ENCODE measurements at regions of chr4 and their contacts with region 1.

Region 1: GRCh38 chr4:115609631-115610030 is 496.2 kb upstream of the NDST4 start:
- DNase-seq: no peak
- ATAC-seq: no peak
- H3K4me3 Mint-ChIP-seq: no peak overlapping the region
- H3K27ac Mint-ChIP-seq: no peak overlapping the region
- H3K4me1 Mint-ChIP-seq: no peaks in the 10 kb centered on the region
- H3K27me3 Mint-ChIP-seq: no peaks in the 10 kb centered on the region
- CTCF ChIP-seq: no peak

Region 2: GRCh38 chr4:116197317-116197809 is 587.7 kb after region 1 on chr4:
- CTCF ChIA-PET with region 1: no interaction called
- POLR2A ChIA-PET with region 1: no interaction called
- intact Hi-C with region 1: no loop called
- DNase-seq: no peak
- ATAC-seq: no peak
- H3K4me3 Mint-ChIP-seq: no peak overlapping the region
- H3K27ac Mint-ChIP-seq: no peak overlapping the region
- H3K4me1 Mint-ChIP-seq: no peaks in the 10 kb centered on the region
- H3K27me3 Mint-ChIP-seq: no peaks in the 10 kb centered on the region
- CTCF ChIP-seq: no peak

Region 3: GRCh38 chr4:116724249-116724648 is 1114.6 kb after region 1 on chr4:
- CTCF ChIA-PET with region 1: no interaction called
- POLR2A ChIA-PET with region 1: no interaction called
- intact Hi-C with region 1: loop called (anchors 10 kb)
- DNase-seq: no peak
- ATAC-seq: no peak
- H3K4me3 Mint-ChIP-seq: no peak overlapping the region
- H3K27ac Mint-ChIP-seq: no peak overlapping the region
- H3K4me1 Mint-ChIP-seq: no peaks in the 10 kb centered on the region
- H3K27me3 Mint-ChIP-seq: no peaks in the 10 kb centered on the region
- CTCF ChIP-seq: no peak